ENCODE measurements at regions of chr3 and their contacts with region 1.

Region 1: DNA sequence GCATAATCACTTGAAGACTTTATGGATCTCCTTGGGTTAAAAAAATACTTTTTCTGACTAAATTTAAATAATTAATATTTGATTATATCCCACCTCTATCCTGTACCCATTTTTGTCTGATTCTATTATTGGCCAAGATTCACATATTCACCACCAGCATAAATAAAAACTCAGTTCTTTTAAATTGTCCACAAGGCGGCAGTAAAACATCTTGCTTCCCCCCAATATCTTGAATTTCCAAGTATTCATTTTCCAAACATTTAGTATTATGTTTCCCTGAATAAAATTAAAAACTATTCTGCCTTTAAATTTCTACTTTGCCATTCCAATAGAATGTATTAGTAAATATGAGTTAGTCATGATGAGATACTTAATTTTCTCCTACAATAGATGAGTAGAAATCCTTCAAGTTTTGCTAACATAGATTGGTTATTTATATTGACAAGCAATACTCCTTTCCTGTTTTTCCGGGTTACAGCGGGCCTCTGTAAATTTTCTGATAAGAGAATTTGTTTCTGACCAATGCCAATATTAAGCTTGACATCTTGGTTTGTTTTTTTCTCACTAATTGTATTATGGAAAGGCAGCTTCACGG is 218.7 kb upstream of the MDFIC2 start:
- DNase-seq: peak in 4 of 9 donors; percentile 4 to 9 (median 6)
- ATAC-seq: no peak
- H3K4me3 ChIP-seq: no peak overlapping the region
- H3K4me3 Mint-ChIP-seq: no peak overlapping the region
- H3K27ac ChIP-seq: no peak overlapping the region
- H3K27ac Mint-ChIP-seq: no peak overlapping the region
- H3K4me1 ChIP-seq: no peaks in the 10 kb centered on the region
- H3K4me1 Mint-ChIP-seq: no peaks in the 10 kb centered on the region
- H3K27me3 ChIP-seq: no peaks in the 10 kb centered on the region
- H3K27me3 Mint-ChIP-seq: peaks cover 2 to 15% (median 10%) of the 10 kb centered on the region in 5 donors

Region 2: GRCh38 chr3:69791919-69792399 is 739.2 kb before region 1 on chr3:
- CTCF ChIA-PET with region 1: no interaction called
- POLR2A ChIA-PET with region 1: no interaction called
- intact Hi-C with region 1: no loop called
- DNase-seq: no peak
- ATAC-seq: peak; percentile 26
- H3K4me3 ChIP-seq: no peak overlapping the region
- H3K4me3 Mint-ChIP-seq: no peak overlapping the region
- H3K27ac ChIP-seq: no peak overlapping the region
- H3K27ac Mint-ChIP-seq: no peak overlapping the region
- H3K4me1 ChIP-seq: no peaks in the 10 kb centered on the region
- H3K4me1 Mint-ChIP-seq: no peaks in the 10 kb centered on the region
- H3K27me3 ChIP-seq: no peaks in the 10 kb centered on the region
- H3K27me3 Mint-ChIP-seq: peaks cover 0 to 7% (median 0%) of the 10 kb centered on the region in 5 donors

Region 3: GRCh38 chr3:70554170-70554569 is 23.0 kb after region 1 on chr3:
- CTCF ChIA-PET with region 1: no interaction called
- POLR2A ChIA-PET with region 1: no interaction called
- intact Hi-C with region 1: no loop called
- DNase-seq: no peak
- ATAC-seq: no peak
- H3K4me3 ChIP-seq: no peak overlapping the region
- H3K4me3 Mint-ChIP-seq: no peak overlapping the region
- H3K27ac ChIP-seq: no peak overlapping the region
- H3K27ac Mint-ChIP-seq: no peak overlapping the region
- H3K4me1 ChIP-seq: no peaks in the 10 kb centered on the region
- H3K4me1 Mint-ChIP-seq: peaks cover 0 to 6% (median 0%) of the 10 kb centered on the region in 7 donors
- H3K27me3 ChIP-seq: no peaks in the 10 kb centered on the region
- H3K27me3 Mint-ChIP-seq: peaks cover 0 to 13% (median 4%) of the 10 kb centered on the region in 5 donors

Region 4: DNA sequence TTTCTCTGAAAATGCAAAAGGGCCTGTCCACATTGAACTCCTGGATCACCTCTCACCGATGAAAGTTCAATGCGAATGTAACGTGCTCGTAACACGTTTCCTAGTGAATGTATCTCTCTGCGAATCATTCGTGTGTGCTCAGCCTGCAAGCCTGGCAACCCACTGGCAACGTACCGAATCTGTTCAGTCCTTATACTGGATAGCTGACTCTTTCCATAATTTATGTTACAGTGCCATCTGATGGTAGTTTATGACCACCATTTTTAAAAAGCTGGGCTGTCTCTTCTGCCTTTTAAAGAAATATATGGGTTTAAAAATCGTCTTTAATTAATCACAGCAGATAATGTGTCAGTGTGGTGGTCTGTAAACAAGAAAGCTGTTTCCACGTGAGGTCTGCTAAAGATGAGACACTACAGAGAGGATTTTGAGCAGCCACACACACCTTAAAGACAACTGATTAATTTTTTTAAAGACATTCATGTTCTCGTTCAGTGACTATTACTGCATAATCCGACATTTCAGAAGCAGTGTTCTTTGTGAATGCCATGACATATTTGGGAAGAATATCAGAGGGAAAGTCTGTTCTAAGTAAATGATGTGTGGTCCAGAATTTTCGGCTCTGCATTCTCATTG is 1121.7 kb after region 1 on chr3:
- CTCF ChIA-PET with region 1: no interaction called
- POLR2A ChIA-PET with region 1: no interaction called
- intact Hi-C with region 1: loop called in 1 of 2 experiments (anchors 5 kb)
- DNase-seq: peak in 6 of 9 donors; percentile 3 to 42 (median 23)
- ATAC-seq: peak; percentile 53
- H3K4me3 ChIP-seq: no peak overlapping the region
- H3K4me3 Mint-ChIP-seq: peak overlapping the region in 1 of 10 donors; percentile 23
- H3K27ac ChIP-seq: no peak overlapping the region
- H3K27ac Mint-ChIP-seq: no peak overlapping the region
- H3K4me1 ChIP-seq: no peaks in the 10 kb centered on the region
- H3K4me1 Mint-ChIP-seq: peaks cover 0 to 5% (median 0%) of the 10 kb centered on the region in 7 donors
- H3K27me3 ChIP-seq: no peaks in the 10 kb centered on the region
- H3K27me3 Mint-ChIP-seq: no peaks in the 10 kb centered on the region